Activated CD4-positive, alpha-beta T cell treated with anti-CD3 and anti-CD28 coated beads, Interleukin-2, amount 10 ng/mL, durations not matched to agents 24 days and 14 days (primary cell): ENCODE measurements at regions of chr9 and their contacts with region 1.

Region 1: GRCh38 chr9:131657890-131658752 is 81.8 kb downstream of the RAPGEF1 start:
- DNase-seq: peak; percentile 74
- H3K4me3 Mint-ChIP-seq: peak overlapping the region; percentile 76
- H3K27ac Mint-ChIP-seq: peak overlapping the region; percentile 99
- H3K4me1 Mint-ChIP-seq: peaks cover 74% of the 10 kb centered on the region
- H3K27me3 Mint-ChIP-seq: no peaks in the 10 kb centered on the region

Region 2: DNA sequence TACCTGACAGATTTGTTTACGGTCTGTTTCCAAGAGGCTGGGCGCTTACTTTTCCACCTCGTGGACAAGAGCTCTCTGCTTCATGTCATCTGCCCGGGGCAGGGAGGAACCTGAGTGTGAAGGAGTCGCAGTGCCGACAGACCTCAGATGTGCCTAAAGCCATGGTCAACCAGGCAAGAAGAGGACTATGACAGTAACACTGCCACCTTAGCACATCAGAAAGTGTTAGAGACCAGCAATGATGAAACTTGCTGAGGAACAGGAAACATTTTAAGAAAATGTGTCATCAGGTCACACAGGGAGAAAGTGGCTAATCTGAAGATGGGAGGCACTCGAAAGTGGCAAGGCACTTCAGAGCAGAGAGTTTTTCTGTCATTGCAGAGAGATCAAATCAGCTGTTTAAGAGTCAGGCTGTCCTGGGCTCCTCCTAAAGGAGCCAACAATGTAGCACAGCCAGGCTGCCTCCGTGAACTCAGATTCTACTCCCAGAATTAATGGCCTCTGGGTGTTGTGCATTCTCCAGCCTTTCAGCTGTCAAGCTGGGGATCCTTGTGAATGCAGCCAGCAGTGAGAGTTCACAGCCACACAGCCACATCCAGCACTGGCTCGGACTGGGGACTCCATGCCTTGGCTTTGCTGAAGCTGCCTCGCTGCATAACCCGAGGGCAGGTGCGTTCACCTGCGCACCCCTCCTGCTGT is 12.9 kb before region 1 on chr9:
- intact Hi-C with region 1: loop called (anchors 1 kb)
- DNase-seq: no peak
- H3K4me3 Mint-ChIP-seq: peak overlapping the region; percentile 47
- H3K27ac Mint-ChIP-seq: peak overlapping the region; percentile 100
- H3K4me1 Mint-ChIP-seq: peaks cover 51% of the 10 kb centered on the region
- H3K27me3 Mint-ChIP-seq: no peaks in the 10 kb centered on the region